Psoas muscle (tissue), 8 donors: ENCODE measurements at regions of chr16 and their contacts with region 1.

Region 1: DNA sequence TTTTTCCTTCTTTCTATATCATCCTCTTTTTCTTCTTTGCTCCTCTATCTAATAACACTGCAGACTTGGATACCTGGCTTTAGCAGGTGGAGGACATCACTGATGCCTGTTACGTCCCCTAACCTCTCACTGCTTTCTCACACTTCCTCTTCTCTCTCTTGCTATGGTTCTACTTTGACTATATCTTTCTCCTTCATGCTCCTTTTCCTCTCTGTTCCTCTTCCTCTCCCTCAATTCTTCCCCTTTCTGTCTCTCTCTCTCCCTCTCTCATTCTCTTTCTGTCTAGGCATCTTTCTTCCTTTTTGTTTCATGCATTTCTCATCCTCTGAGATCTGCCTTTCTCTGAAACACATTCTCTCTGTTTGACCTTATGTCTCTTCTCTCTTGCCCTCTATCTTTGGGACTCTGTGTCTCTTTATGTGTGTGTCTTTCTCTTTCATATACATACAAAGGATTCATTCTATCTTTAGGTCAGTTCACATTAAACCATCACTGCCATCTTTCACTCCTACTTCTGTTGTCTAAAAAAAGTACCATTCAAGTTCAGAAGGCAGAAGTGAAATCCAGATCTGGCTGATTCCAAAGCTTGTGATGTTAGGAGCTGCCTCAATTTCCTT is 353.7 kb downstream of the SHISA9 start:
- DNase-seq: no peak
- ATAC-seq: no peak
- H3K4me3 ChIP-seq: no peak overlapping the region
- H3K27ac ChIP-seq: no peak overlapping the region
- H3K4me1 ChIP-seq: no peaks in the 10 kb centered on the region
- H3K27me3 ChIP-seq: peaks cover 0 to 2% (median 0%) of the 10 kb centered on the region in 3 donors
- CTCF ChIP-seq: no peak

Region 2: GRCh38 chr16:12220766-12221165 is 1034.3 kb before region 1 on chr16:
- intact Hi-C with region 1: loop called in 1 of 2 experiments (anchors 5 kb)
- DNase-seq: no peak
- ATAC-seq: no peak
- H3K4me3 ChIP-seq: no peak overlapping the region
- H3K27ac ChIP-seq: no peak overlapping the region
- H3K4me1 ChIP-seq: no peaks in the 10 kb centered on the region
- H3K27me3 ChIP-seq: no peaks in the 10 kb centered on the region
- CTCF ChIP-seq: no peak